Cardiac septum (tissue), 1 donor: ENCODE measurements at regions of chr3 and their contacts with region 1.

Region 1: GRCh38 chr3:77038468-77038929 is 1.4 kb upstream of the ROBO2 start:
- DNase-seq: no peak

Region 2: DNA sequence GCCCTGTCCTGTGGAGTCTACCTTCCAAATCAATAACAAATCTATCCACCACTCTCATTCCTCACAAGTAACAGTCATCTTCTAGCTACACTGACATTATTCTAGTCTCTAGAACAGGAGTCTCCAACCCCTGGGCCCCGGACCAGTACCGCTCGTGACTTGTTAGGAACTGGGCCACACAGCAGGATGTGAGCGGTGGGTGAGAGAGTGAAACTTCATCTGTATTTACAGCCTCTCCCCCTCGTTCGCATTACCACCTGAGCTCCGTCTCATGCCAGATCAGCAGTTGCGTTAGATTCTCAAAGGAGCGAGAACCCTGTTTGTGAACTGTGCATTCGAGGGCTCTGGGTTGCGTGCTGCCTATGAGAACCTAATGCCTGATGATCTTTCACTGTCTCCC is 33.3 kb after region 1 on chr3:
- intact Hi-C with region 1: no loop called
- DNase-seq: no peak

Region 3: DNA sequence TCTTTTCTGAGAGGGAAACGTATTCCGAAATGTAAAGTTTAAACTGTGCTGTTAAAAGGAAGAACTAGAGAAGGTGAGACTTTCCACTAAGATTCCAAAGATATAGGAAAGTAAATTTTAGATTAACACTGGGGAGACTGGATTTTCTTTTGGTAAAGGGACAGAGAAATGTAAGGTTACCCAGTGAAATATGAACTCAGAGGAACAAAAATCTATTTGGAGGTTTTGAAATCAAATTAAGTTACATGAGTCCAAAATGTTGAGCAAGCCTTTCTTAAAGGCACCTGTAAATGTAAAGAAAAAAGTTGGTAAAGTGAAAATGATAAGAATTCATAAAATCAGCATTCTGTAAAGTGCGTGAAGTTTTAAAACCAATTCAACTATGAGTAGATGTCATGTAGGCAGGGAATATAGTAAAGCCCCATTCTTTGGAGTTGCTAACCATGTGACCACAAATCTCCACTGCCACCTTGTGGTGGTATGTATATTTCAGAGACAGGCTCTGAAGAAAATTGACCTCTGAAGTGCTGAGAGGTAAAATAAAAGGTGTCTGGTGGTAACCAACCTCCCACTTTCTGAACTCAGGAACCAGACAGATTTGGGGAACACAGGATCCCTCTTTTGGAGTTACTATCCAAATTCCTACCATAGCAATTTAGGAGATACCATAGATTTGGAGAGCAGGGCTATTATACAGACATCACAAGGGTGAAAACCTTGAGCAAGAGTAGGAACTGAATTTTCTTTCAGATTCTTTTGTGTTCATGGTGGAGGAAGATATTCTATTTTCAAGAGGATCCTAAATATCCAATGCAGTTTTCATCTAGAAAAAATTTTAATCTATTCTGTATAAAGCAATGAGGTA is 216.7 kb after region 1 on chr3:
- intact Hi-C with region 1: loop called (anchors 2 kb)
- DNase-seq: no peak

Region 4: GRCh38 chr3:78645628-78646310 is 1607.3 kb after region 1 on chr3:
- intact Hi-C with region 1: loop called (anchors 10 kb)
- DNase-seq: no peak